GM12878 (cell line): ENCODE measurements at regions of chr7 and their contacts with region 1.

Region 1: GRCh38 chr7:129169171-129169671 is 19.2 kb upstream of the SMO start:
- DNase-seq: no peak
- ATAC-seq: peak; percentile 78
- H3K4me3 ChIP-seq: peak overlapping the region; percentile 52
- H3K27ac ChIP-seq: peak overlapping the region; percentile 77
- H3K4me1 ChIP-seq: peaks cover 33% of the 10 kb centered on the region
- H3K27me3 ChIP-seq: no peaks in the 10 kb centered on the region
- CTCF ChIP-seq: no peak
- EP300 ChIP-seq: no peak
- POLR2A ChIP-seq: peak; percentile 80
- RAD21 ChIP-seq: no peak

Region 2: DNA sequence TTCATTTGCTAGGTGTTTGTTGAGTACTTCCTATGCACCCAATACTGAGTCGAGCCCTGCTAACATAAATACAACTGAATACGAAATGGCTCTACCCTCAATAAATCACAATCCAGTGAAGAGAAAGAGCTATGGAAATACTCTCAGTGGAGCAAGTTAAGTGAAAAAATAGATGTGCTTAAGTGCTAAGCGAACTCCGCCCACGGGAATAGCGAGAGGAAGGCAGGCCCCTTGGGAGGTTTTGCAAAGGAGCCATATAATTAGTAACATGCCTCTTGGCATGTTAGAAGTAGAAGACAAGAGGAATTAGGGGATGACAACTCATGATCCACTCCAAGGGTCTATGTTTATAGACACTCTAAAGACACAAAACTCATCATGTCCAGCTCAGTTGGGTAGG is 67.5 kb before region 1 on chr7:
- CTCF ChIA-PET with region 1: interaction called, 34 read pairs
- POLR2A ChIA-PET with region 1: interaction called, 3 read pairs
- RAD21 ChIA-PET with region 1: interaction called, 15 read pairs
- SMC1A ChIA-PET with region 1: interaction called, 10 read pairs
- in situ Hi-C with region 1: no loop called
- intact Hi-C with region 1: no loop called
- DNase-seq: no peak
- ATAC-seq: no peak; the same call in 2 of the 3 replicates
- H3K4me3 ChIP-seq: no peak overlapping the region
- H3K27ac ChIP-seq: no peak overlapping the region
- H3K4me1 ChIP-seq: peaks cover 21% of the 10 kb centered on the region
- H3K27me3 ChIP-seq: no peaks in the 10 kb centered on the region
- CTCF ChIP-seq: no peak
- EP300 ChIP-seq: no peak
- POLR2A ChIP-seq: no peak
- RAD21 ChIP-seq: no peak

Region 3: GRCh38 chr7:129122751-129123509 is 46.3 kb before region 1 on chr7:
- CTCF ChIA-PET with region 1: interaction called, 8 read pairs
- POLR2A ChIA-PET with region 1: interaction called, 3 read pairs
- RAD21 ChIA-PET with region 1: interaction called, 5 read pairs
- SMC1A ChIA-PET with region 1: interaction called, 21 read pairs
- in situ Hi-C with region 1: no loop called
- intact Hi-C with region 1: loop called (anchors 2 kb)
- DNase-seq: peak; percentile 95
- ATAC-seq: peak; percentile 91
- H3K4me3 ChIP-seq: peak overlapping the region; percentile 43
- H3K27ac ChIP-seq: peak overlapping the region; percentile 96
- H3K4me1 ChIP-seq: peaks cover 36% of the 10 kb centered on the region
- H3K27me3 ChIP-seq: no peaks in the 10 kb centered on the region
- CTCF ChIP-seq: no peak
- EP300 ChIP-seq: peak; percentile 98
- POLR2A ChIP-seq: no peak
- RAD21 ChIP-seq: no peak

Region 4: GRCh38 chr7:129144095-129144833 is 25.0 kb before region 1 on chr7 and contains the start of gene TSPAN33:
- CTCF ChIA-PET with region 1: interaction called, 168 read pairs
- POLR2A ChIA-PET with region 1: interaction called, 32 read pairs
- RAD21 ChIA-PET with region 1: interaction called, 71 read pairs
- SMC1A ChIA-PET with region 1: interaction called, 83 read pairs
- in situ Hi-C with region 1: no loop called
- intact Hi-C with region 1: loop called (anchors 1 kb)
- DNase-seq: no peak
- ATAC-seq: peak; percentile 76
- H3K4me3 ChIP-seq: peak within 1 kb of the TSS; percentile 97
- H3K27ac ChIP-seq: peak within 1 kb of the TSS; percentile 92
- H3K4me1 ChIP-seq: peaks cover 28% of the 10 kb centered on the region
- H3K27me3 ChIP-seq: no peaks in the 10 kb centered on the region
- CTCF ChIP-seq: no peak
- EP300 ChIP-seq: no peak
- POLR2A ChIP-seq: peak; percentile 73
- RAD21 ChIP-seq: no peak
- polyA plus RNA-seq, gene TSPAN33: 17.8 to 30.0 TPM

Region 5: DNA sequence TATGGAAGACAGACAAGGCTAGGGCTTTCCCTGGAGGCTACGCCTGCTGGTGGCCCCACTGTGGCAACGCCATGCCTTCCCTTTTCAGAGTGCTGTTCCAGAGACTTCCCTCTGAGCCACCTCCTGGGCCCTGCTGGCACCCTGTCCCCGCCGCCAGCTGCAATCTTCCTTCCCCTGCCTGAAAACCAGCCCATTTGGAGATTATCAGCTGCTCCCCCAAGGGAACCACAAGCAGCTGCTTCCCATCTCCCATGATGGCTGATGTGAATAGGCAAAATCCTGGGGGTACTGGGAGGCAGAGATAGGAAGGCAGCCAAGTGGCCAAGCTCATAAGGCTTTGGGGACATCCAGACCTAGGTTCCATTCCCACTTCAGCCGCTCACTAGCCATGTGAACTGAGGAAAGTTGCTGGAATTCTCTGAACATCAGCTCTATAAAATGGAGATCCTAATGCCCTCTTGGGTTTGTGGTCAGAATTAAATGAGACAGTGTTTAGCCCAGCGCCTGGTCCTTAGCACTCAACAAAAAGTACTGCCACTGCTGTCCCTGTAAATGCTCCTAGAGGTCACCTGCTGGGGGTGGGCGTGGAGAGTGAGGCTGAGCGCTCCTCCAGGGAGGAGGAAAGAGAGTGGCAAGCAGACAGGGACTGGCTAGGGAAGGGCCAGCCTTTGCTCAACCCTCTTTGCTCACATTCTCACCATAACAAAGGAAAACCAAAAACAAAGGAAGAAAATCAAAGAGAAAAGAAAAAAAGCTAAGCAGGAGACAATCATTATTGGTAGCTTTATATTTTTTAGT is 18.8 kb before region 1 on chr7:
- CTCF ChIA-PET with region 1: interaction called, 168 read pairs
- POLR2A ChIA-PET with region 1: interaction called, 32 read pairs
- RAD21 ChIA-PET with region 1: interaction called, 71 read pairs
- SMC1A ChIA-PET with region 1: interaction called, 83 read pairs
- in situ Hi-C with region 1: no loop called
- intact Hi-C with region 1: loop called (anchors 1 kb)
- DNase-seq: no peak
- ATAC-seq: no peak
- H3K4me3 ChIP-seq: no peak overlapping the region
- H3K27ac ChIP-seq: peak overlapping the region; percentile 21
- H3K4me1 ChIP-seq: peaks cover 33% of the 10 kb centered on the region
- H3K27me3 ChIP-seq: no peaks in the 10 kb centered on the region
- CTCF ChIP-seq: no peak
- EP300 ChIP-seq: no peak
- POLR2A ChIP-seq: peak; percentile 26; the same call in 1 of the 2 replicates
- RAD21 ChIP-seq: no peak

Region 6: DNA sequence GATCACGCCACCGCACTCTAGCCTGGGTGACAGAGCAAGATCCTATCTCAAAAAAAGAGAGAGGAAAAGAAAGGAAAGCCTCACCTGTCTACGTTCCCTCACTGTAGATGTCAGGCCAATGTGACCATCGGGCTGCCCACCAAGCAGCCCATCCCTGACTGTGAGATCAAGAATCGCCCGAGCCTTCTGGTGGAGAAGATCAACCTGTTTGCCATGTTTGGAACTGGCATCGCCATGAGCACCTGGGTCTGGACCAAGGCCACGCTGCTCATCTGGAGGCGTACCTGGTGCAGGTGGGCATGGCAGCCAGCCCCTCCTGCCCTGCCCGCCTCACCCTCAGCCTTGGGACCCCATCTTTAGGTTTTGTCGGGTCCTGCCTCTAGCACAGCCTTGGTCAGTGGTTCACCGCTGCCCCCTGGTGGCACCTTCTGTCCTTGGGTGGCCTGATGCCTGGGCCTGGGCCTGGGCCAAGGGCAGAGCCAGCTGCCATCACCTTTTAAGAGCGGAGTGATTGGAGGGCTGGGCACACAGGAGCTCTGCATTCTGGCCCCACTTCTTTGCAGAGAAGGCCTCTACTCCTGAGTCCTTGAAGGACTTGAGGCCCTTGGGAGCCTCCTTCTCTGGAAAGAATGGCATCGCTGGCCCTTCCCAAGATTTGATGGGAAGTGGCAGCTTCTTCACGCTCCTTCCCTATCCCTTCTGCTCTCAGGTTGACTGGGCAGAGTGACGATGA is 41.2 kb after region 1 on chr7:
- CTCF ChIA-PET with region 1: interaction called, 109 read pairs
- POLR2A ChIA-PET with region 1: interaction called, 3 read pairs
- RAD21 ChIA-PET with region 1: interaction called, 67 read pairs
- SMC1A ChIA-PET with region 1: interaction called, 70 read pairs
- in situ Hi-C with region 1: no loop called
- intact Hi-C with region 1: no loop called
- DNase-seq: no peak
- ATAC-seq: peak; percentile 97
- H3K4me3 ChIP-seq: no peak overlapping the region
- H3K27ac ChIP-seq: no peak overlapping the region
- H3K4me1 ChIP-seq: no peaks in the 10 kb centered on the region
- H3K27me3 ChIP-seq: no peaks in the 10 kb centered on the region
- CTCF ChIP-seq: peak; percentile 86 to 94 (median 91)
- EP300 ChIP-seq: no peak
- POLR2A ChIP-seq: no peak
- RAD21 ChIP-seq: peak; percentile 97